ENCODE measurements at regions of chr3 and their contacts with region 1.

Region 1: GRCh38 chr3:122957707-122958689 is 69.6 kb downstream of the SEMA5B start:
- DNase-seq: no peak
- H3K4me3 ChIP-seq: no peak overlapping the region
- H3K27ac ChIP-seq: no peak overlapping the region
- H3K4me1 ChIP-seq: no peaks in the 10 kb centered on the region
- H3K27me3 ChIP-seq: peaks cover 12 to 25% of the 10 kb centered on the region in 2 experiments
- CTCF ChIP-seq: no peak
- POLR2A ChIP-seq: no peak

Region 2: DNA sequence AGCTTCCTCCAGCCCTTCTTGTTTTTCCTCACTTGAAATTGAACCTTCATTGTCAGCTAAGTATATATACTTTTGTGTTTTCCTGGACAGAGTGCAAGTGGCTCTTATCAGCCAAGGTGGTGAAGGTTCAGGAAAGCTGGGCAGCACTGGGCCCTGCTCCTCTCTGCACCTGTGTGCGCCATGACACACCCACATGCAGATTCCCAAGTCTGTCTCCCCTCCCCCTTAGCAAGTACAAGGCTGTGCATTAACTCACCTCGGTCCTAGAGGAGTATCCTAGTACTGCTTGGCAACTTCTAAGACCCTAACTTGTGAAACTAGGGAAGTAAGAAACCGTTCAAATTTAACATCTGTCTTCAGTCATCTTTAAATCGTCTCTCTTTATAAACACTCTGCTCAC is 77.4 kb before region 1 on chr3:
- CTCF ChIA-PET with region 1: no interaction called
- POLR2A ChIA-PET with region 1: no interaction called
- dilution Hi-C with region 1: no loop called
- intact Hi-C with region 1: no loop called
- DNase-seq: no peak
- H3K4me3 ChIP-seq: no peak overlapping the region
- H3K27ac ChIP-seq: no peak overlapping the region
- H3K4me1 ChIP-seq: peaks cover 4% of the 10 kb centered on the region
- H3K27me3 ChIP-seq: no peaks in the 10 kb centered on the region
- CTCF ChIP-seq: no peak
- POLR2A ChIP-seq: no peak

Region 3: GRCh38 chr3:123004201-123004918 is 46.4 kb after region 1 on chr3:
- CTCF ChIA-PET with region 1: no interaction called
- POLR2A ChIA-PET with region 1: no interaction called
- dilution Hi-C with region 1: no loop called
- intact Hi-C with region 1: loop called (anchors 1 kb)
- DNase-seq: no peak
- H3K4me3 ChIP-seq: no peak overlapping the region
- H3K27ac ChIP-seq: no peak overlapping the region
- H3K4me1 ChIP-seq: no peaks in the 10 kb centered on the region
- H3K27me3 ChIP-seq: peaks cover 11 to 21% of the 10 kb centered on the region in 2 experiments
- CTCF ChIP-seq: no peak
- POLR2A ChIP-seq: no peak

Region 4: DNA sequence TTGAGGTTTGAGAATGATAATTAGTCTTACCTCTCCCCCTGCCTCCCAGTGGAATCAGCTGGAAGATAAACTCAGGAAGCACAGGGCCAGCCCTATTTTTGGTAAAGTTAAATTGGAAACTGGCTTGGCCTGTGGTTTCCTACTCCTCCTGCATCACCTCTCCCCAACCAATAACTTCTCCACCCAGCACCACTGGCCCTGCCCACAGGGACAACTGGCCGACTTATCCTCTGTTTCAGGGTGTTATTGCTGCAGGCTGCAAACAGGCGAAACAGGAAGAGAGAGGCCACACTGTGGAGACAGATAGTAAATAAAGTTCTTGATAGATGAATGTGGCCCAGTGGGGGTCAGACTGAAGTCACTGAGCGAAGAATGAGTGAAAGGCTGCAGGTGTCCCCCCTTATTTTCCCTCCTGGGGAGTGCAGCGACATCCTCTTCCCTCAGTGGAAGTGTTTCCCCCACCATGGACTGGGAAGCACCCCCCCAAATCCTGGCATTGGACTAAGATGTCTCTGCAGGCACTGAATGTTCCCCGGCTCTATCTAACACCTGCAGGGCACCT is 156.0 kb after region 1 on chr3:
- CTCF ChIA-PET with region 1: no interaction called
- POLR2A ChIA-PET with region 1: no interaction called
- dilution Hi-C with region 1: no loop called
- intact Hi-C with region 1: no loop called
- DNase-seq: no peak
- H3K4me3 ChIP-seq: no peak overlapping the region
- H3K27ac ChIP-seq: no peak overlapping the region
- H3K4me1 ChIP-seq: no peaks in the 10 kb centered on the region
- H3K27me3 ChIP-seq: no peaks in the 10 kb centered on the region
- CTCF ChIP-seq: no peak
- POLR2A ChIP-seq: no peak